CD8-positive, alpha-beta T cell (primary cell): ENCODE measurements at regions of chr6 and their contacts with region 1.

Region 1: DNA sequence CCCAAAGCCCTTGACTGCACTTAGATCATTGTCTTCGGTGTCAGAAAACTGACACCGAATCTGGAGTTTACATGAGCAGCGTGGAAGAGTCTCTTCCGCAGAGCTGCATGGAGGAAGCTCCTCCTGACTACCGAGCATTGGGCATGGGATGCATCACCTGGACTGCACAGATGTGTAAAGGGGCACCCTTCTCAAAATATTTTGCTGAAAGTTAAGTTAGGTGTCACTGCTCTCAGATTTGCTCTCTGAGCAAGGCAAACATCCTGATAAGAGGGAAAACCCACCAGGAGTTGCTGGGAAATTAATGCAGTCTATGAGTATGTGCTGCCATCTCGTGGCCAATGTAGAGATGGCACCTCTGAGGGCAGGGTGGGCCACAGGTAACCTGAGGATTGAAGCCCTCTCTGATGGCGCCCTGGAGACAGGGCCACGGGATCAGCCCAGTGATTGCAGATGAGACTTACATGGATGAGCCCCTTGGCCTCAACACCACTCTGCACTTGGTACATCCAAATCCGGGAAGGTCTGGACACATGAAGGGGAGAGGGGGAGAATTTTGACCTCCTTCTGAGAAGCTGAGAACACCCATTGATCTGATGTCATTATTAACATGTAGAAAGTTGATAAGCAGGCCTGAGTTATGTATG is 129.9 kb downstream of the LPA start:
- DNase-seq: peak; percentile 21 to 76 (median 62)
- ATAC-seq: peak; percentile 86
- H3K4me3 ChIP-seq: no peak overlapping the region
- H3K4me3 Mint-ChIP-seq: no peak overlapping the region
- H3K27ac ChIP-seq: no peak overlapping the region
- H3K27ac Mint-ChIP-seq: no peak overlapping the region
- H3K4me1 ChIP-seq: no peaks in the 10 kb centered on the region
- H3K4me1 Mint-ChIP-seq: no peaks in the 10 kb centered on the region
- H3K27me3 ChIP-seq: no peaks in the 10 kb centered on the region
- H3K27me3 Mint-ChIP-seq: peaks cover 17% of the 10 kb centered on the region
- CTCF ChIP-seq: peak; percentile 95

Region 2: GRCh38 chr6:159174263-159174969 is 1359.8 kb before region 1 on chr6:
- CTCF ChIA-PET with region 1: no interaction called
- POLR2A ChIA-PET with region 1: no interaction called
- intact Hi-C with region 1: loop called in 1 of 2 experiments (anchors 2 kb)
- DNase-seq: peak; percentile 34 to 72 (median 61)
- ATAC-seq: peak; percentile 75
- H3K4me3 ChIP-seq: no peak overlapping the region
- H3K4me3 Mint-ChIP-seq: peak overlapping the region; percentile 29
- H3K27ac ChIP-seq: no peak overlapping the region
- H3K27ac Mint-ChIP-seq: no peak overlapping the region
- H3K4me1 ChIP-seq: no peaks in the 10 kb centered on the region
- H3K4me1 Mint-ChIP-seq: peaks cover 11% of the 10 kb centered on the region
- H3K27me3 ChIP-seq: peaks cover 8 to 11% of the 10 kb centered on the region in 2 experiments
- H3K27me3 Mint-ChIP-seq: peaks cover 70% of the 10 kb centered on the region
- CTCF ChIP-seq: peak; percentile 83

Region 3: GRCh38 chr6:159720708-159721107 is 813.5 kb before region 1 on chr6:
- CTCF ChIA-PET with region 1: no interaction called
- POLR2A ChIA-PET with region 1: no interaction called
- intact Hi-C with region 1: loop called in 1 of 2 experiments (anchors 1 kb)
- DNase-seq: peak in 5 of 9 experiments; percentile 33 to 84 (median 53)
- ATAC-seq: peak; percentile 74
- H3K4me3 ChIP-seq: no peak overlapping the region
- H3K4me3 Mint-ChIP-seq: no peak overlapping the region
- H3K27ac ChIP-seq: no peak overlapping the region
- H3K27ac Mint-ChIP-seq: no peak overlapping the region
- H3K4me1 ChIP-seq: peaks cover 6% of the 10 kb centered on the region
- H3K4me1 Mint-ChIP-seq: peaks cover 16% of the 10 kb centered on the region
- H3K27me3 ChIP-seq: no peaks in the 10 kb centered on the region
- H3K27me3 Mint-ChIP-seq: no peaks in the 10 kb centered on the region
- CTCF ChIP-seq: peak; percentile 65

Region 4: DNA sequence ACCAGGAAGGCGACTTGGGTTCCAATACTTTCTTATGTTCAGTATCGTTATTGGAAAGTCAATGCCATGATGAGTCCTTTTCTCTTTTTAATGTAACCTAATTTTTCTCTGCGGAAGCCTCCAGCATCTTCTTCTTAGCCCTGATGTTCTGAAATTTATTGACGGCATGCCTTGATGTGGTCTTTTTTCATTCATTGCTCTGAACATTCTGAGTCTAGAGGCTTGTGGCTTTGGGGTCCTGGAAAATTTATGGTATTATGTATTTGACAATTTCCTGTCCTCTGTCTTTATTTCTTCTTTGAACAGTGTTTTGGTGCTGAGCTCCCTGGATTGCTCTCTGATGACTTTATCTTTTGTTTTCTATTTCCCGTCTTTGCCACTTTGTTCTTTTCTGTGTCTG is 672.1 kb before region 1 on chr6:
- CTCF ChIA-PET with region 1: interaction called, 5 read pairs
- POLR2A ChIA-PET with region 1: no interaction called
- intact Hi-C with region 1: loop called (anchors 2 to 5 kb)
- DNase-seq: peak in 2 of 9 experiments; percentile 42 to 70
- ATAC-seq: peak; percentile 69
- H3K4me3 ChIP-seq: no peak overlapping the region
- H3K4me3 Mint-ChIP-seq: peak overlapping the region; percentile 10
- H3K27ac ChIP-seq: no peak overlapping the region
- H3K27ac Mint-ChIP-seq: peak overlapping the region; percentile 64
- H3K4me1 ChIP-seq: peaks cover 27% of the 10 kb centered on the region
- H3K4me1 Mint-ChIP-seq: peaks cover 22% of the 10 kb centered on the region
- H3K27me3 ChIP-seq: no peaks in the 10 kb centered on the region
- H3K27me3 Mint-ChIP-seq: peaks cover 3% of the 10 kb centered on the region
- CTCF ChIP-seq: no peak

Region 5: GRCh38 chr6:160137989-160138835 is 396.0 kb before region 1 on chr6:
- CTCF ChIA-PET with region 1: interaction called, 9 read pairs
- POLR2A ChIA-PET with region 1: interaction called, 3 read pairs
- intact Hi-C with region 1: loop called in 1 of 2 experiments (anchors 1 kb)
- DNase-seq: peak; percentile 36 to 74 (median 60)
- ATAC-seq: peak; percentile 75
- H3K4me3 ChIP-seq: no peak overlapping the region
- H3K4me3 Mint-ChIP-seq: no peak overlapping the region
- H3K27ac ChIP-seq: no peak overlapping the region
- H3K27ac Mint-ChIP-seq: no peak overlapping the region
- H3K4me1 ChIP-seq: no peaks in the 10 kb centered on the region
- H3K4me1 Mint-ChIP-seq: peaks cover 5% of the 10 kb centered on the region
- H3K27me3 ChIP-seq: no peaks in the 10 kb centered on the region
- H3K27me3 Mint-ChIP-seq: peaks cover 7% of the 10 kb centered on the region
- CTCF ChIP-seq: peak; percentile 69

Region 6: DNA sequence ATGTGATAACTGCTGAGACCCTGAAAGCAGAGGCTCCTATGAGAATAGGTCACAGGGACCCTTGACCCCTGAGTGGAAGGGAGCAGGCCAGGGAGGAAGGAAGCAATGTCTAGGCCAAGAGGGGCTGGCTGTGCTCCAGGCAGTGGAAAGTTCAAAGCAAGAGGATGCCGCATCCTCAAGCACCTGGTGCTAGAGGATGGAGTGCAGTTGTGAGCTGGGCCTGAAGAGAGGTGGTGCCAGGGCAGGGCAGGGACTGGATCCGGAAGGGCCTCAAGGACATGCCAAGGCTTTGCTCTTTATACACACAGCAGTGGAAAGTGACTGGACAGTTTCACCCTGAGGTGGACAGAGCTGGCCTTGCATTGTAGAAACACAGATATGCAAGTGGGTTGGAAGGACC is 89.0 kb before region 1 on chr6:
- CTCF ChIA-PET with region 1: no interaction called
- POLR2A ChIA-PET with region 1: no interaction called
- intact Hi-C with region 1: no loop called
- DNase-seq: no peak
- ATAC-seq: no peak
- H3K4me3 ChIP-seq: no peak overlapping the region
- H3K4me3 Mint-ChIP-seq: no peak overlapping the region
- H3K27ac ChIP-seq: no peak overlapping the region
- H3K27ac Mint-ChIP-seq: no peak overlapping the region
- H3K4me1 ChIP-seq: no peaks in the 10 kb centered on the region
- H3K4me1 Mint-ChIP-seq: no peaks in the 10 kb centered on the region
- H3K27me3 ChIP-seq: no peaks in the 10 kb centered on the region
- H3K27me3 Mint-ChIP-seq: peaks cover 36% of the 10 kb centered on the region
- CTCF ChIP-seq: no peak

Region 7: DNA sequence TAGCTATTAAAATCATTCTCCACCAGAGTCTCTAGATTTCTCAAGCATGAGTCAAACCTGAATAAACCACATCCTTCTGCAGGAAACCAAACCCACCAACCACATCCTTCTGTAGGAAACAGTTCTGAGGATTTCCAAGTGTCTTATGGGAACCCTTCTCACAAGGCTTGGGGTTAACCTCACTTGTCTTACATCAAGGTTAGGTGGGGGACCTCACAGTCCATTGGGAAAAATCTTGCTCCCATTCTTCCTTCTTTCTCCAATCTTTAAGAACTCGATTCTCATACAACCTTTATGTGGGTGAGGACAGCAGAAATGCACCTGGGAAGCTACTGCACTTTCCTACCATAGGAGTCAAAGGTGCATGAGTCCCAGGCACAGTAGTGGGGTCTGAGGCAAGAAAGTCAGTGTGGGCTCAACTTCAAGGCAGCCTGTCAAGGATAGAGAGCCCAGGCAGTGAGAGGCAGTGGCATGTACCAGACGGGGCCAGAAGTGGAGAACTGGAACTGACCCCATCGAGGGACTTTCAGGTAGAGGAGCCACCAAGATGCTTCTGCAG is 71.5 kb before region 1 on chr6:
- CTCF ChIA-PET with region 1: interaction called, 12 read pairs
- POLR2A ChIA-PET with region 1: no interaction called
- intact Hi-C with region 1: no loop called
- DNase-seq: peak in 8 of 9 experiments; percentile 35 to 92 (median 61)
- ATAC-seq: peak; percentile 89
- H3K4me3 ChIP-seq: peak overlapping the region; percentile 2 to 34
- H3K4me3 Mint-ChIP-seq: peak overlapping the region; percentile 32
- H3K27ac ChIP-seq: peak overlapping the region in 1 of 2 experiments; percentile 43
- H3K27ac Mint-ChIP-seq: peak overlapping the region; percentile 57
- H3K4me1 ChIP-seq: peaks cover 46% of the 10 kb centered on the region
- H3K4me1 Mint-ChIP-seq: peaks cover 82% of the 10 kb centered on the region
- H3K27me3 ChIP-seq: no peaks in the 10 kb centered on the region
- H3K27me3 Mint-ChIP-seq: peaks cover 42% of the 10 kb centered on the region
- CTCF ChIP-seq: no peak